Gastrocnemius medialis (tissue), 4 donors: ENCODE measurements at regions of chr6 and their contacts with region 1.

Region 1: DNA sequence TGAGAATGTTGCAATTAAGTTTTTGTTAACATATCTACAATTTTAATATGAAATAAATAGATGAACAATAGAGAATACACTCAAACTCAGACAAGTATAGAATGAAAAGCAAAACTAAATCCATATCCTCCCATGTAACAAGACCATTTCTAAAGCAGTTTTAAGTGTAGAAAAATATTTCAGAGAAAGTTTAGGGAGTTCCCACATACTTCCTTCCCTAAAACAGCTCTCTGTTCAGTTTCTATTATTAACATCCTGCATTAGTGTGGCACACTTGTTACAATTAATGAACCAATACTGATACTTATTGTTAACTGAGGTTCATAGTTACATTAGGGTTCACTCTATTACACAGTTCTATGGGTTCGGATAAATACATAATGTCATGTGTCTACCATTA is 38.4 kb downstream of the HLA-DRB5 start:
- DNase-seq: no peak
- ATAC-seq: no peak
- H3K4me3 ChIP-seq: no peak overlapping the region
- H3K27ac ChIP-seq: no peak overlapping the region
- H3K4me1 ChIP-seq: no peaks in the 10 kb centered on the region
- H3K27me3 ChIP-seq: no peaks in the 10 kb centered on the region
- CTCF ChIP-seq: no peak
- POLR2A ChIP-seq: no peak

Region 2: DNA sequence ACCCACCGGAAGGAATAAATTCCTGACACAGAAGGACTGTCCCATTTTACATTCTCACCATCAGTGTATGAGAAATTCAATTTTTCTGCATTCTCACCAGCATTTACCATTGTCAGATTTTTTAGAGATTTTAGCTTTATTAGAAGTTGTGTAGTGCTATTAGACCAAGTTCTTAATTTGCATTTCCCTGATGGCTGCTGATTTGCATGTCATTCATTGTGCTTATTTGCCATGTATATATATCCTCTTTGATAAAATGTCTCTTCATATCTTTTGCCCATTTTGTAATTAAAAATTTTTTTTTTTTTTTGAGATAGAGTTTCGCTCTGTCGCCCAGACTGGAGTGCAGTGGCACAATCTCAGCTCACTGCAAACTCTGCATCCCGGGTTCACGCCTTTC is 48.1 kb after region 1 on chr6:
- in situ Hi-C with region 1: no loop called
- intact Hi-C with region 1: loop called (anchors 5 kb)
- DNase-seq: no peak
- ATAC-seq: no peak
- H3K4me3 ChIP-seq: no peak overlapping the region
- H3K27ac ChIP-seq: no peak overlapping the region
- H3K4me1 ChIP-seq: no peaks in the 10 kb centered on the region
- H3K27me3 ChIP-seq: no peaks in the 10 kb centered on the region
- CTCF ChIP-seq: no peak
- POLR2A ChIP-seq: no peak